ENCODE measurements at regions of chr21 and their contacts with region 1.

Region 1: GRCh38 chr21:25801217-25802014 is 66.6 kb downstream of the GABPA start:
- DNase-seq: peak; percentile 95
- ATAC-seq: peak; percentile 99
- H3K4me3 Mint-ChIP-seq: peak overlapping the region; percentile 51
- H3K27ac Mint-ChIP-seq: no peak overlapping the region
- H3K4me1 Mint-ChIP-seq: peaks cover 5% of the 10 kb centered on the region; the same call in 1 of the 2 replicates
- H3K27me3 Mint-ChIP-seq: no peaks in the 10 kb centered on the region
- CTCF ChIP-seq: peak; percentile 99

Region 2: DNA sequence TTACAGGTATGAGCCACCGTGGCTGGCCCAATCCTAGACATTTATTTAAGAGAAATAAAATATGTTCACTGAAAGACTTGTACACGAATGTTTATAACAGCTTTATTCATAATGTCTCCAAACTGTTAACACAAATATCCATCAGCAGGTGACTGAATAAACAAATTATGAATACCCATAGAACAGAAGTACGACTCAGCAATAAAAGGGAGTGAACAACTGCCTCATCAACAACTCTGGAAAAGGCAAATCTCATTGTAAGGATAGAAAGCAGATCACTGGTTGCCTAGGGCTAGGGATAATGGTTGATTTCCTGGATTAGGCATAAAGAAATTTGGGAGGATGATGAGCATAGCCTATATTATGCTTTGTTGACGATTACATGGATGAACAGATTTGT is 25.0 kb before region 1 on chr21:
- CTCF ChIA-PET with region 1: interaction called, 14 read pairs
- POLR2A ChIA-PET with region 1: no interaction called
- DNase-seq: no peak
- ATAC-seq: no peak
- H3K4me3 Mint-ChIP-seq: no peak overlapping the region
- H3K27ac Mint-ChIP-seq: no peak overlapping the region
- H3K4me1 Mint-ChIP-seq: no peaks in the 10 kb centered on the region
- H3K27me3 Mint-ChIP-seq: no peaks in the 10 kb centered on the region
- CTCF ChIP-seq: no peak

Region 3: DNA sequence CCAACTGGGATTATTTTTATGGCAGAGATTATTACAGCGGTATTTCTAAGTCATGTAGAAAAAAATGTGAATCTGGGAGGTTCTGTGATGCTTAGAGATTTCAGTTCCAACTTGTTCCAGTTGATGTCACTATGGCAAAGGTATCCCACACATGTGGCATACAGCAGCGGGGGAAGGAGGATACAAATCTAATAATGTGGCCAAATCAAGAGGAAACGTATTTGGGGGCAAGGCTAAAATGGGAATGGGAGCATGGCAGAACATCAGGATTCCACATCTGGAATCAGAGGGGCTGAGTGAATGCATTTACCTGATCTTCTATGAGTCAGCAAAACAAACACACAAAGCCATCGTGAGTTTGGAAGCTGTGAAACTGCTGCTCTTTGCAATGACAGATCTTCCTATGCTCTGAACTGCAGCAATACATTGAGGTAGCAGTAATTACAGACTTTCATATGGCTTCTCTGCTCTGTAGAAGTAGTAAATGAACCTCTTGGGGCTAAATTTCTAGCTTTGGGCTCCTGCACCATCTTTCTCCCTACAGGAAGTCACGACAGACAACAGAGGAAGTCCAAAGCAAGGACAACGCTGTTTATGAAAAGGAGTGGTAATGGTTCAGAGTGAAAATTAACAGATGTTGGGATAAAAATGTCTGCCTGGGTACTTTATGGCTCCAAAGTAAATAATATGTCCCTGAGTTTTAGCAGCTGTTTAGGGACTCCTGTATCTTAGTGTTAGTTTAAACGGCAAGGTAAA is 11.1 kb before region 1 on chr21:
- CTCF ChIA-PET with region 1: interaction called, 28 read pairs
- POLR2A ChIA-PET with region 1: no interaction called
- DNase-seq: no peak
- ATAC-seq: peak; percentile 79
- H3K4me3 Mint-ChIP-seq: no peak overlapping the region
- H3K27ac Mint-ChIP-seq: no peak overlapping the region
- H3K4me1 Mint-ChIP-seq: peaks cover 8% of the 10 kb centered on the region; the same call in 1 of the 2 replicates
- H3K27me3 Mint-ChIP-seq: no peaks in the 10 kb centered on the region
- CTCF ChIP-seq: no peak

Region 4: DNA sequence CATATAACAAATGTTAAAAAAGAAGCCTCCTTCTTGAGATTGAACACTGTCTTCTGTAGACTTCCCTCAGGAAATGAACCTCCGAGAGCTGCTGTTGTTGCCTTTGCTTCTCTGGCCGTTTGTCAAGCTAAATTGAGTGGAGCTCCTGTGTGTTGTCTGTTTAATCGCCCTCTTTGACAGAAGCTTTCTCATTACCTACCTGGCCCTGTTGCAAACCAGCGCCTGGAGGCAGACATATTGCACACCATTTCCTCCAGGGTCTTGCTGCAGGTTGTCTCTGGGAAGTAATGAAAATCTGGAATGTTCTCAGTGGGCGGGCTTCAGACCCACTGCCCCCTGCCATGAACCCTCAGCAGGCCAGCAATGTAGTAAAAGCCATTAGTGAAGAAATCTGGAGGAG is 16.7 kb after region 1 on chr21:
- CTCF ChIA-PET with region 1: interaction called, 30 read pairs
- POLR2A ChIA-PET with region 1: no interaction called
- DNase-seq: no peak
- ATAC-seq: peak; percentile 44
- H3K4me3 Mint-ChIP-seq: no peak overlapping the region
- H3K27ac Mint-ChIP-seq: 0 out of 2 replicates have a peak overlapping the region, but pooled peaks have one; percentile 41
- H3K4me1 Mint-ChIP-seq: peaks cover 7% of the 10 kb centered on the region
- H3K27me3 Mint-ChIP-seq: no peaks in the 10 kb centered on the region
- CTCF ChIP-seq: no peak

Region 5: GRCh38 chr21:25862596-25862995 is 61.2 kb after region 1 on chr21:
- CTCF ChIA-PET with region 1: interaction called, 15 read pairs
- POLR2A ChIA-PET with region 1: no interaction called
- DNase-seq: peak; percentile 17
- ATAC-seq: peak; percentile 64; the same call in 1 of the 2 replicates
- H3K4me3 Mint-ChIP-seq: no peak overlapping the region
- H3K27ac Mint-ChIP-seq: no peak overlapping the region
- H3K4me1 Mint-ChIP-seq: peaks cover 24% of the 10 kb centered on the region
- H3K27me3 Mint-ChIP-seq: no peaks in the 10 kb centered on the region
- CTCF ChIP-seq: peak; percentile 70

Region 6: GRCh38 chr21:26070822-26071425 is 269.5 kb after region 1 on chr21:
- CTCF ChIA-PET with region 1: no interaction called
- POLR2A ChIA-PET with region 1: no interaction called
- DNase-seq: no peak
- ATAC-seq: peak; percentile 57
- H3K4me3 Mint-ChIP-seq: peak overlapping the region; percentile 3
- H3K27ac Mint-ChIP-seq: peak overlapping the region; percentile 69
- H3K4me1 Mint-ChIP-seq: peaks cover 91% of the 10 kb centered on the region
- H3K27me3 Mint-ChIP-seq: no peaks in the 10 kb centered on the region
- CTCF ChIP-seq: no peak

Measured in WTC11 (cell line).